Head of caudate nucleus (tissue), 42 donors: ENCODE measurements at regions of chr14 and their contacts with region 1.

Region 1: GRCh38 chr14:30214461-30215090 is 286.9 kb upstream of the PRKD1 start:
- DNase-seq: peak in 20 of 42 donors; percentile 14 to 77 (median 45)

Region 2: GRCh38 chr14:28751467-28752058 is 1463.0 kb before region 1 on chr14:
- intact Hi-C with region 1: loop called (anchors 5 kb)
- DNase-seq: peak in 26 of 42 donors; percentile 37 to 84 (median 68)

Region 3: GRCh38 chr14:29548948-29549370 is 665.6 kb before region 1 on chr14:
- intact Hi-C with region 1: loop called (anchors 5 kb)
- DNase-seq: peak in 10 of 42 donors; percentile 10 to 60 (median 26)

Region 4: DNA sequence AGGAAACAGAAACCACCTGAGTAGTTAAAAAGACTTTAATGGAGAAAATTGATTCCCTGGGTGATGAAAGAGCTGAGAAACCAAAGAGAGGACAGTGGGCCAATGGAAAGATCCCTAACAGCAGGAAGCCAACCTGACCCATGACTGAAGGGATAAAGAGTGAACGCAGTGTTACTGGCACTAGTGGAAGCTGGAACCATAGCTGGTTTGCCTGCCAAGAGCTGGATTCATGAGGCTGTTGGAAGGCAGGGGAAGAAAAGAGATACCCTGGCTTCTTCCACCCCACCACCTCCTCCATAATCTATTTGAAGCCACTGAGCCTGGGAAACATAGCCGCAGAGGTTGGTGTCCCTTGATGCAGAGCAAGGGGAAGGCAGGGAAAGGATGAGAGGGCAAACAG is 161.5 kb before region 1 on chr14:
- intact Hi-C with region 1: no loop called
- DNase-seq: peak in 5 of 42 donors; percentile 5 to 10 (median 7)

Region 5: DNA sequence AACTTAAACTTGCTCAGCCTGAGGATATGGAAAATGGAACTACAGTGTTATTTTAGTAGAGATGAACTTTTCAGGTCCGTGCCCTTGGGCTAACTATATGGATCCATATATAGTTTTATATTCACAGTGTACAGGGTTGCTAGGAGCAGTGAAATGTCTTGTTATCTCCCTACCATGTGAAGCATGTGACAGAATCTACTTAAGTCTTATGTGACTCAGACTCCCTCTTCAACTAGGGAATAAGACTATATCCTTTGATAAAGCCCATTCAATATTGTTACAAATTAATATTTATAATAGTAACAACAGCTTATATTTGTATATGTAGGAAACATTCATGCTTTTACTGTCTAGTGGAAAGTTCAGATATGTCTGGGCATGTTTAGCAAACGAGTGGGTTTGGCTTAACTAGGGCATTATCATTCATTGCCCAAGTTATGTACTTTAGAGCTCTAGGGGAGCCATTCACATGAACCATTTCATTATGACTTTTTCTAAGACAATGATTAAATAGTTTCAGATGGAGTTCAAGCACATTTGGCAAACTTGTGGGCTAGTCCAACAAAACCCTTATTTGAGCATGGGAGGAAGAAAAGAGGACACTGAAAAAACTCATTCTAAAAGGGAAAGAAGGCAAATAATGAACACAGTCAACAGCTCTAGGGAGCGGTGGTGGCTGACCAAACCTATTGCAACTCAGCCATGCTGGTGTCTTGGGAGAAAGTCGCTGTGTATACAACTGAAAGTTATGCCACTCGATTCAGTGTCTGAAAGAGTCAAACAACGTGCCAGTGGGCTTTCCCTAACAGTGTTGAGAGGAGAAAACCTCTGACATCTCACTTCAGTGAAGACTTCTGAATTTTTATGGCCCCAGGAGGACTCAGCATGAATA is 38.5 kb after region 1 on chr14:
- intact Hi-C with region 1: no loop called
- DNase-seq: no peak